PC-9 (cell line): ENCODE measurements at regions of chr17 and their contacts with region 1.

Region 1: GRCh38 chr17:76840443-76840767 is 27.8 kb upstream of the MGAT5B start:
- DNase-seq: no peak
- H3K4me3 ChIP-seq: no peak overlapping the region
- H3K27ac ChIP-seq: no peak overlapping the region
- H3K4me1 ChIP-seq: peaks cover 4% of the 10 kb centered on the region; the same call in 1 of the 2 replicates
- H3K27me3 ChIP-seq: no peaks in the 10 kb centered on the region
- CTCF ChIP-seq: no peak

Region 2: DNA sequence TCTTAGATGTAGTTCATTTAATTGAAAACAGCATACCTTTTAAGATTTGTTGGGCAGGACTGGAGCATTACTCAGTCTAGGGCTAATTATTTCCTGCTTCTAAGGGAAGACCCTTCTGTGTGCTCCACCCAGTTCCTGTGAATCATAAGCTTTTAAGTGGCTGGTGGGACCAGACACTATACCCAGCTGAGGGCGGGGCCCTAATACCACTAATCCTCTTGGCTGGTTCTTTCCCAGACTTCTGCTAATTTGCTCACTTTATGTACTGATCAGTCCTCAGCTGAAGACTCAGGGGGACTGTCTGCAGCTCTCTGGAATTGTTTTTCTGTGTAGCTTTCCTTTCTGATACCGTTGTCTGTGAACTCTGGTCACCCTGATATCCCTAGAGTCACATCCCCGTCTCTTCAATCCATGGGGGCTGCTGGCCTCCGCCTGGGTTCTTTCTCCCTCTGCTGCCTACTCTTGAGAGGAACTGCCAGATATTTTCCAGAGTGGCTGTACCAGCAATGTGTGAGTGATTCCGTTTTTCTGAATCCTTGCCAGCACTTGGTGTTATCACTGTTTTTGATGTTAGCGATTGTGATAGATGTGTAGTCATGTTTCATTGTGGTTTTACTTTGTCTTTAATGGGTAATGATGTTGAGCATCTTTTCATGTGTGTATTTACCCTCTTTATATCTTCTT is 67.4 kb before region 1 on chr17:
- CTCF ChIA-PET with region 1: no interaction called
- POLR2A ChIA-PET with region 1: interaction called, 13 read pairs
- intact Hi-C with region 1: no loop called
- DNase-seq: peak; percentile 29 to 66
- H3K4me3 ChIP-seq: no peak overlapping the region
- H3K27ac ChIP-seq: peak overlapping the region; percentile 45; the same call in 1 of the 2 replicates
- H3K4me1 ChIP-seq: peaks cover 13% of the 10 kb centered on the region; the same call in 1 of the 2 replicates
- H3K27me3 ChIP-seq: no peaks in the 10 kb centered on the region
- CTCF ChIP-seq: no peak

Region 3: DNA sequence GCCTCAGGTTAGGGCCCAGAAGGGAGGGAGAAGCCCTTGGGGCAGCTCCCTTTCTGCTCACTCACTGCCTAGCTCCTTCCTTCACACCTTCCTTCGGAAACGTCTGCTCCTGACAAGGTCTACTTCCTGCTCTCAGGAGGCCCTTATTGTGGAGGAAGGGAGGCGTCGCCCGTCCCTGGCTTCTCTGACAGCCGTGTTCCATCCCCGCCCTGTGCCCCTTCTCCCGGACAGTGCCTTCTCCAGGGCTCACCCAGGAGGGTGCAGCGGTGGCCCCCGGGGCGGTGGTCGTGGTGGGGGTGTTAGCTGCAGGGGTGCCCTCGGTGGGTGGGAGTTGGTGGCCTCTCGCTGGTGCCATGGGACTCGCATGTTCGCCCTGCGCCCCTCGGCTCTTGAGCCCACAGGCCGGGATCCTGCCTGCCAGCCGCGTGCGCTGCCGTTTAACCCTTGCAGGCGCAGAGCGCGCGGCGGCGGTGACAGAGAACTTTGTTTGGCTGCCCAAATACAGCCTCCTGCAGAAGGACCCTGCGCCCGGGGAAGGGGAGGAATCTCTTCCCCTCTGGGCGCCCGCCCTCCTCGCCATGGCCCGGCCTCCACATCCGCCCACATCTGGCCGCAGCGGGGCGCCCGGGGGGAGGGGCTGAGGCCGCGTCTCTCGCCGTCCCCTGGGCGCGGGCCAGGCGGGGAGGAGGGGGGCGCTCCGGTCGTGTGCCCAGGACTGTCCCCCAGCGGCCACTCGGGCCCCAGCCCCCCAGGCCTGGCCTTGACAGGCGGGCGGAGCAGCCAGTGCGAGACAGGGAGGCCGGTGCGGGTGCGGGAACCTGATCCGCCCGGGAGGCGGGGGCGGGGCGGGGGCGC is 532.3 kb after region 1 on chr17:
- CTCF ChIA-PET with region 1: no interaction called
- POLR2A ChIA-PET with region 1: no interaction called
- intact Hi-C with region 1: no loop called
- DNase-seq: no peak
- H3K4me3 ChIP-seq: no peak overlapping the region
- H3K27ac ChIP-seq: no peak overlapping the region
- H3K4me1 ChIP-seq: no peaks in the 10 kb centered on the region
- H3K27me3 ChIP-seq: no peaks in the 10 kb centered on the region
- CTCF ChIP-seq: no peak